Lower leg skin (tissue), 4 donors: ENCODE measurements at regions of chr17 and their contacts with region 1.

Region 1: GRCh38 chr17:11331547-11332513 is 90.8 kb downstream of the SHISA6 start:
- DNase-seq: no peak
- H3K4me3 ChIP-seq: no peak overlapping the region
- CTCF ChIP-seq: no peak
- POLR2A ChIP-seq: no peak

Region 2: GRCh38 chr17:11356371-11356770 is 24.5 kb after region 1 on chr17:
- intact Hi-C with region 1: loop called (anchors 1 kb)
- DNase-seq: no peak
- H3K4me3 ChIP-seq: no peak overlapping the region
- CTCF ChIP-seq: no peak
- POLR2A ChIP-seq: no peak